Activated naive CD4-positive, alpha-beta T cell treated with anti-CD3 and anti-CD28 coated beads, Interleukin-2, amount 10 ng/mL, durations not matched to agents 7 days and 5 days (primary cell): ENCODE measurements at regions of chr6 and their contacts with region 1.

Region 1: DNA sequence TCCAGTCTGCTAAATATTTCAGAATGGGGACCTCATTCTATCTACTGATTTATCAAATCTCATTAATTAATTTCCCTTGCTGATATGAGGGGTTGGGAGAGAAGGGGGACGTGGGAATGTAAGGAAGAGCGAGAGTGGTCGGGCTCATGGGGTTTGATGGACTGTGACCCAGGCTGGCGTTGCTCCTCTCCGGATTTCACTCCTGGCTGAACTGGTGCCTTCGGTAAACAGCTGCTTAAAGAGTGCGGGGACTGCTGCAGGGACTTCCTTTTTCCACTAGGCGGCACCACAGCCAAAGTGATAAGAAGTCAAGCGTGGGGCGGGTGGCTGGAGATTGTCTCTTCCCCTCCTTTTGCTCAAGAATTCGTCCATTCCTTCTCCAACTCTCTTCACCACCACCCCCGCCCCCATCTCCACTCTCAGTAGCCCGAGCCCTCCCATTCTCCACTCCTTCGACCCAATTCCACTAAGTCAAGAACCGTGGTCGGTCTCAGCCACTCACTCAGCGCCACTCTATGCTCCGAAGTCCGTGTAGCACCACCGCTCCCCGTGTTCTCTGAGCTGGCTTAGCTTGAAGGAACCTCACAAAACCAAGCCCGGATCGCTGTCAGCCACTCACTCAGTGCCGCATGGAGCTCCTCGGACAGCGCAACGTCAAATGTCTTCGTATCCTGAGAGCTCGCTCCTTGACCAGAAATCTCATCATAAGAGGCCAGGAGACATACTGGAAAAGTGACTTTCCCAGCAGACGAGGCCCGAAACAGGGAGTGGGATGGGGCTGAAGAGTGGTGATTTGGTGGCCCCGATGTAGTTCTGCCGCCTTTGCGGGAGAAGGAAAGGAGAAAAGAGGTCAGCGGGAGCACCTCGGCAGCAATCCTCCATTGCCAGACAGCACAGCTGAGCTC is 9.7 kb downstream of the TRIM31 start:
- DNase-seq: peak; percentile 90
- H3K4me3 Mint-ChIP-seq: peak overlapping the region; percentile 75
- H3K27ac Mint-ChIP-seq: peak overlapping the region; percentile 47
- H3K4me1 Mint-ChIP-seq: peaks cover 48% of the 10 kb centered on the region
- H3K27me3 Mint-ChIP-seq: peaks cover 90% of the 10 kb centered on the region

Region 2: DNA sequence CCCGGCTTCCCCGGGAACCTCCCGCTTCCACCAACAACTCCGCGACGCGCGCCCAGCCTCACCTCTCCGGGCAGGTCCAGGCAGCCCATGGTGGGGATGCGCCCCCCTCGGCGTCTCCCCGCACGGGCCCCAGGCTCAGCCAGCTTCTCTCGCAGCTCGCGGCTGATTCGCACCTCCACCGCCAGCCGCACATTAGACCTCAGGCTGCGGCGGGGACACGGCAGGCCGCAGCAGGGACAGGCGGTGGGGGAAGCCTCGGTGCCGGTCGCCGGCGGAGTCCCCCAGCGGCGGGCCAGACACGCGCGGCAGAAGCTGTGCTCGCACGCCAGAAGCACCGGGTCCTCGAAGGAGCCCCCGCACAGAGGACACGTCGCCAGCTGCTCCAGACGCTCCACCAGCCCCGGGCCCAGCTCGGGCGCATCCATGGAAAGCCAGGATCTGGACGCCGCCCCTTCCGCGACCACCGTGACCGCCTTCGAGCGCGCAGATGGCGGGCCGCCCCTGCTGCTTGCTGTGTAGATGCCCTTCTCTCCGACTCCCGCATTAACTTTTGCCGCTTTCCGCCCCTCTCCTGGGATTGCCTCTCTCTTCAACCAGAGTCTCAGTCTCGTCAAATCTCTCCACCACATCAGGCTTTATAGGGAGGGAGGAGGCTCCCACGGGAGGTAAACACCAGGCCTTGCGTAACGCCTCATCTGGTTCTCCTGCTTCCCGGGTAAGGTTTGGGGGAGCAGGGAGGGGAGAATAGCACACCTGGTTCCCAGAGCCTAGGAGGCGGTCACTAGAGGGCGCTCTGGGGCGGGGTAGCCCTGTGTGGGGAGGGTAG is 27.8 kb before region 1 on chr6 and contains the start of gene RNF39:
- CTCF ChIA-PET with region 1: interaction called, 13 read pairs
- DNase-seq: no peak
- H3K4me3 Mint-ChIP-seq: peak within 1 kb of the TSS; percentile 10
- H3K27ac Mint-ChIP-seq: no peak within 1 kb of the TSS
- H3K4me1 Mint-ChIP-seq: peaks cover 49% of the 10 kb centered on the region
- H3K27me3 Mint-ChIP-seq: peaks cover 96% of the 10 kb centered on the region

Region 3: GRCh38 chr6:30122515-30122914 is 19.3 kb after region 1 on chr6:
- CTCF ChIA-PET with region 1: interaction called, 17 read pairs
- DNase-seq: no peak
- H3K4me3 Mint-ChIP-seq: no peak overlapping the region
- H3K27ac Mint-ChIP-seq: no peak overlapping the region
- H3K4me1 Mint-ChIP-seq: no peaks in the 10 kb centered on the region
- H3K27me3 Mint-ChIP-seq: peaks cover 66% of the 10 kb centered on the region

Region 4: DNA sequence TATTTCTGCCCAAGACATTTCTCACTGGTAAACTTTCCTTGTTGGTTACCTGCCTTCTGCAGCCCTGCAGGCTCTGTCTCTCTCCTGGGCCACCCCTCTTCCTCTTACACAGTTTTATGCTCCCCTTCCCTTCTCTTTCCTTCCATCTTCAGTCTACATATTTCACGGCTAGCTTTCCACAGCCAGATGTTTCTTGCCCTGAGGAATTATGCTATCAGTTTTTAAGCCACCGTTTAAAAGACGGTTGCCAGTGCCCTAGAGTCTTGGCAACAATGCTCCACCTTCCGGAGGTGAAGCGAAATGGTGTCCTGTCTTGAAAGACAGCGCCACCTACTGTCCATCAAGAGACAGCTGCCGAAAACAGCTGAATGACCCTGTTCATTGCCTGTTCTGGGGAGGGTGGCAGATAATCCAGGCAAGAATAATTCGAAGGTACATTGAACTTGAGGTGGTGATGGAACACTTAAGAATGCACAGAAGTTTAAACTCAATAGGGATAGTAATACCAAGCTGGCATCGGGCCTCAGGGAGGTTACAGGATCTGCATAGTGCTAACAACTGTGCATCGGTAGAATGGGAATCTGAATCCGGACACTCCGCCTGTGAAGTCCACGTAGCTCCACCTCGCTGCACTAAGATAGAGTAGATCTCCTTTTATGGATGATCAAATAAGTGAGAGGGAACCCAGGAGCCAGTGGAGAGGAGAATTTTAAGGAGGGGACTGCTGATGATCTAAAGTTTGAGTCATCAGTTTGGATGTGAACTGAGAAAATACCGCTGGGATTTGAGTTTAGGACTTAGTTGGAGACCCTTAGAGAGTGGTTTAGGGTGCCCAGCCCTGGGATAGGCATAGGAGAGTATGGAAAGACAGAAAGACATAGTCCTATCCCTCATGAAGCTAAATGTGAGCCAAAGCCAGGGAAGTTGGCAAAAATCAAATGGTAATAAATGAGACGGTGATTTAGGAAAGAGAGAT is 28.0 kb after region 1 on chr6:
- CTCF ChIA-PET with region 1: interaction called, 180 read pairs
- DNase-seq: peak; percentile 75
- H3K4me3 Mint-ChIP-seq: no peak overlapping the region
- H3K27ac Mint-ChIP-seq: no peak overlapping the region
- H3K4me1 Mint-ChIP-seq: peaks cover 15% of the 10 kb centered on the region
- H3K27me3 Mint-ChIP-seq: peaks cover 80% of the 10 kb centered on the region

Region 5: GRCh38 chr6:30169658-30170614 is 66.7 kb after region 1 on chr6:
- CTCF ChIA-PET with region 1: interaction called, 41 read pairs
- DNase-seq: no peak
- H3K4me3 Mint-ChIP-seq: no peak overlapping the region
- H3K27ac Mint-ChIP-seq: no peak overlapping the region
- H3K4me1 Mint-ChIP-seq: peaks cover 21% of the 10 kb centered on the region
- H3K27me3 Mint-ChIP-seq: peaks cover 56% of the 10 kb centered on the region

Region 6: DNA sequence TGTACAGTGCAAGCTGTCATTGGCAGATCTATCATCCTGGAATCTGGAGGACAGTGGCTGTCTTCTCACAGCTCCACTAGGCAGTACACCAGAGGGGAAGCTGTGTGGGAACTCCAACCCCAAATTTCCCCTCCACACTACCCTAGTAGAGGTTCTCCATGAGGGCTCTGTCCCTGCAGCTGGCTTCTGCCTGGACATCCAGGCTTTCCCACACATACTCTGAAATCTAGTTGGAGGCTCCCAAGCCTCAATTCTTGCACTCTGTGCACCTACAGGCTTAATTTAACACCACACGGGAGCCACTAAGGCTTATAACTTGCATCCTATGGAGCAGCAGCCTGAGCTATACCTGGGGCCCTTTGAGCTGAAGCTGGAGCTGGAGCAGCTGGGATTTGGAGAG is 180.5 kb after region 1 on chr6:
- CTCF ChIA-PET with region 1: no interaction called
- DNase-seq: no peak
- H3K4me3 Mint-ChIP-seq: no peak overlapping the region
- H3K27ac Mint-ChIP-seq: no peak overlapping the region
- H3K4me1 Mint-ChIP-seq: no peaks in the 10 kb centered on the region
- H3K27me3 Mint-ChIP-seq: no peaks in the 10 kb centered on the region